ENCODE measurements at regions of chr17 and their contacts with region 1.

Region 1: GRCh38 chr17:42819944-42820535 is 4.0 kb downstream of the BECN1 start:
- DNase-seq: peak; percentile 43
- ATAC-seq: peak; percentile 20
- H3K4me3 Mint-ChIP-seq: peak overlapping the region; percentile 28
- H3K27ac Mint-ChIP-seq: no peak overlapping the region
- H3K4me1 Mint-ChIP-seq: peaks cover 21% of the 10 kb centered on the region
- H3K27me3 Mint-ChIP-seq: no peaks in the 10 kb centered on the region
- CTCF ChIP-seq: no peak

Region 2: GRCh38 chr17:42566883-42567573 is 253.0 kb before region 1 on chr17 and contains the start of gene MLX:
- CTCF ChIA-PET with region 1: no interaction called
- POLR2A ChIA-PET with region 1: interaction called, 12 read pairs
- intact Hi-C with region 1: no loop called
- DNase-seq: peak; percentile 90
- ATAC-seq: peak; percentile 83
- H3K4me3 Mint-ChIP-seq: peak within 1 kb of the TSS; percentile 98
- H3K27ac Mint-ChIP-seq: peak within 1 kb of the TSS; percentile 95
- H3K4me1 Mint-ChIP-seq: peaks cover 35% of the 10 kb centered on the region
- H3K27me3 Mint-ChIP-seq: no peaks in the 10 kb centered on the region
- CTCF ChIP-seq: no peak
- total RNA-seq, gene MLX: 53.4 and 59.7 TPM in 2 replicates

Region 3: GRCh38 chr17:42720996-42721583 is 99.0 kb before region 1 on chr17:
- CTCF ChIA-PET with region 1: interaction called, 4 read pairs
- POLR2A ChIA-PET with region 1: interaction called, 10 read pairs
- intact Hi-C with region 1: loop called (anchors 1 kb)
- DNase-seq: no peak
- ATAC-seq: peak; percentile 73
- H3K4me3 Mint-ChIP-seq: no peak overlapping the region
- H3K27ac Mint-ChIP-seq: peak overlapping the region; percentile 20
- H3K4me1 Mint-ChIP-seq: peaks cover 2% of the 10 kb centered on the region
- H3K27me3 Mint-ChIP-seq: no peaks in the 10 kb centered on the region
- CTCF ChIP-seq: no peak

Region 4: DNA sequence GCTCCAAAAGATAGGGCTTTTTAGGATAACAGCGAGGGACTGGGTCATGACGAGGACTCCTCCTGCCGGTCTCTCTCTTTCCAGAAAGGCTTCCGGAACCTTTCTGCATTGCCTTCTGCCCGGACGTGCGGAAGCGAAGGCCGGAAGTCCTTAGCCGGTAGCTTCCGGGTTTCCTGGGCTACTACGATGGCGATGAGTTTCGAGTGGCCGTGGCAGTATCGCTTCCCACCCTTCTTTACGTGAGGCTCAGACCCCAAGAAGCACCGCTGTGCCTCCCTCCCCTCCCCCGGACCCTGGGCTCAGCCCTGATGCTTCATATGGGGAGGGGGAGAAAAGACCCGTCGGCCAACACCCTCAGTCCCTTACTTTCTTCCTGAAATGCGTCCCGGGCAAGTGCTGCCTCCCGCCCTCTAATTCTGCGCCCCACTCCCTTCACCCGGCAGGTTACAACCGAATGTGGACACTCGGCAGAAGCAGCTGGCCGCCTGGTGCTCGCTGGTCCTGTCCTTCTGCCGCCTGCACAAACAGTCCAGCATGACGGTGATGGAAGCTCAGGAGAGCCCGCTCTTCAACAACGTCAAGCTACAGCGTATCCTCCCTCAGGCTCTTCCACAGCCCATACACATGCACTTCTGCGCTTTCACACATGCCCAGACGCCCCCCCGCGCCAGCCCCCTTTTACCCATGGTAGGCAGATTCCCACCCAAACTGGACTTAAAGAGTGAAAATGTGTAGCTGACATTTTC is 46.6 kb before region 1 on chr17 and contains the start of gene VPS25:
- CTCF ChIA-PET with region 1: no interaction called
- POLR2A ChIA-PET with region 1: interaction called, 26 read pairs
- intact Hi-C with region 1: no loop called
- DNase-seq: peak; percentile 71
- ATAC-seq: peak; percentile 92
- H3K4me3 Mint-ChIP-seq: peak within 1 kb of the TSS; percentile 98
- H3K27ac Mint-ChIP-seq: peak within 1 kb of the TSS; percentile 96
- H3K4me1 Mint-ChIP-seq: peaks cover 35% of the 10 kb centered on the region
- H3K27me3 Mint-ChIP-seq: no peaks in the 10 kb centered on the region
- CTCF ChIP-seq: no peak
- total RNA-seq, gene VPS25: 49.7 and 49.8 TPM in 2 replicates

Region 5: GRCh38 chr17:42832974-42833766 is 13.1 kb after region 1 on chr17 and contains the start of gene PSME3:
- CTCF ChIA-PET with region 1: interaction called, 27 read pairs
- POLR2A ChIA-PET with region 1: interaction called, 115 read pairs
- intact Hi-C with region 1: loop called (anchors 1 kb)
- DNase-seq: peak; percentile 84
- ATAC-seq: peak; percentile 91
- H3K4me3 Mint-ChIP-seq: peak within 1 kb of the TSS; percentile 97
- H3K27ac Mint-ChIP-seq: peak within 1 kb of the TSS; percentile 99
- H3K4me1 Mint-ChIP-seq: peaks cover 24% of the 10 kb centered on the region
- H3K27me3 Mint-ChIP-seq: no peaks in the 10 kb centered on the region
- CTCF ChIP-seq: no peak
- total RNA-seq, gene PSME3: 136 and 141 TPM in 2 replicates

Region 6: DNA sequence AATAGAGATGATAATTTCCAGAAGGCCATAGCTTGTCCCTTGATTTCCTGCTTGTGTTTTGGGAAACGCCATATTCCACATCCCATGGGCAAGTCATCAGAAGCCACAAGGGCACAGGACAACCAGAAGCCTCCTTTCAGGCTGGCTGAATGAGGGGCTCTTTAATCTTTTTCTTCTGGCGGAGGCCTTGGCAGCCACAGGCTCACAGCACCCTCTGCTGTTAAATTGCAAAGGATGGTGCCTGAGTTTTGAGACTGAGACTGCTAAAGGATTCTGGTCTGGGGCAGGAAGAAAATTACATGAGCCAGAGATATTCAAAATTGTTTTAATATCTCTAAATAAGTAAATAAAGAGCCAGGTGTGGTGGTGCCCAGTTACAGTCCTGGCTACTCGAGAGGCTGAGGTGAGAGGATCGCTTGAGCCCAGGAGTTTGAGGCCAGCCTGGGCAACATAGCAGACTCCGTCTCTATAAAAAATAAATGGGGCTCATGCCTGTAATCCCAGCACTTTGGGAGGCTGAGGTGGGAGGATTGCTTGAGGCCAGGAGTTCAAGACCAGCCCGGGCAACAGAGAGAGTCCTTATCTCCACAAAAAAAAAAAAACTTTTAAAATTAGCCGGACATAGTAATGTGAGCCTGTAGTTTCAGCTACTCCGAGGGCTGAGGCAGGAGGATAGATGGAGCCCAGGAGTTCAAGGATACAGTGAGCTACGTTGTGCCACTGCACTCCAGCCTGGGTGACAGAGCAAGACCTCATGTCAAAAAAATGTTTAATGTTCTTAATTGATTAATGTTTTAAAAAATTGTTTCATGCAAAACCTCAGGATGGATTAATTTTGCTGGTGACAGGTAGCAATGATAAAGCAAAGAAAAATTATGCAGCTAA is 117.9 kb after region 1 on chr17:
- CTCF ChIA-PET with region 1: no interaction called
- POLR2A ChIA-PET with region 1: no interaction called
- intact Hi-C with region 1: loop called (anchors 1 kb)
- DNase-seq: no peak
- ATAC-seq: peak; percentile 49
- H3K4me3 Mint-ChIP-seq: no peak overlapping the region
- H3K27ac Mint-ChIP-seq: no peak overlapping the region
- H3K4me1 Mint-ChIP-seq: no peaks in the 10 kb centered on the region
- H3K27me3 Mint-ChIP-seq: no peaks in the 10 kb centered on the region
- CTCF ChIP-seq: no peak